Ascending aorta (tissue), 2 donors: ENCODE measurements at regions of chr7 and their contacts with region 1.

Region 1: GRCh38 chr7:97027427-97028234 is 3.0 kb upstream of the DLX5 start:
- DNase-seq: peak in 1 of 2 donors; percentile 84
- H3K4me3 ChIP-seq: peak overlapping the region; percentile 46 to 64
- H3K27ac ChIP-seq: no peak overlapping the region
- H3K4me1 ChIP-seq: peaks cover 13 to 16% of the 10 kb centered on the region in 2 donors
- H3K27me3 ChIP-seq: no peaks in the 10 kb centered on the region
- CTCF ChIP-seq: peak; percentile 69 to 86 (median 81)

Region 2: GRCh38 chr7:95916573-95917297 is 1110.9 kb before region 1 on chr7:
- intact Hi-C with region 1: loop called (anchors 2 kb)
- DNase-seq: peak in 1 of 2 donors; percentile 90
- H3K4me3 ChIP-seq: peak overlapping the region in 1 of 2 donors; percentile 37
- H3K27ac ChIP-seq: no peak overlapping the region
- H3K4me1 ChIP-seq: peaks cover 0 to 3% of the 10 kb centered on the region in 2 donors
- H3K27me3 ChIP-seq: no peaks in the 10 kb centered on the region
- CTCF ChIP-seq: peak; percentile 72 to 94 (median 91)

Region 3: DNA sequence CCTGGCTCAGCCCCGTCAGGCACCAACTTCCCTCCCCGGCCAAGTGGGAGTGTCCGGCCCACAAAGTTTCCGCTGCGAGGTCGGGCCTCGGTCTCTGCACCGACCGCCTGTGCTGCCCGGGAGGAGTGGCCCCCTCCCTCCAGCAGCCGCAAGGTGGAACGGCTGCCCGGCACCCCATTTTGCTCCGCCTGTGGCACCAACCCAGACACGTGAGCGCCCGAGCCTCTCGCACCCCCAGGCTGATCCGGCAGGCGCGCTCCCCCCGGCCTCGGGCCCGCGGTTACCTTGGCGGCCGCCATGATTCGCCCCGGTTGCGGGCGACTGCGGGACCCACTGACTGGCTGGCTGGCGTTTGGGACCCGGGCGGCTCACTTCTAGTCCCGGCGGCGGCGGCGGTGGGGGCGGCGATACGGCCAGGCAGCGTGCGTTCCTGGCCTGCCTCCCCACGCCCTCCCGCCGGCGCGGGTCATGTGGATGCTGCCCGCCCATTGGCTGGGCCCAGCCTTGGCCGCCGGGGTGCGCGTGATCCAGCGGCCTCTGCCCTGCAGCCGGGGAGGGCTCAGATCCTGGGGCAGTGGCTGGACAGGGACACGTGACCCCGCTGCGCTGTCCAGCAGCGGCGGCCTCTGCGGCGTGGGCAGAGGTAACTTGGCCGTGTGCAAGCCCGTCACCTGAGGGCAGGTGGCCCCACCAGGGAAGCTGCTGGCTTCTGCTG is 705.8 kb before region 1 on chr7 and contains the start of gene SLC25A13:
- intact Hi-C with region 1: loop called (anchors 10 kb)
- DNase-seq: peak; percentile 80 to 94
- H3K4me3 ChIP-seq: peak within 1 kb of the TSS; percentile 68 to 85
- H3K27ac ChIP-seq: peak within 1 kb of the TSS; percentile 93
- H3K4me1 ChIP-seq: peaks cover 6 to 16% of the 10 kb centered on the region in 2 donors
- H3K27me3 ChIP-seq: no peaks in the 10 kb centered on the region
- CTCF ChIP-seq: no peak
- total RNA-seq, gene SLC25A13: 5.6 TPM

Region 4: DNA sequence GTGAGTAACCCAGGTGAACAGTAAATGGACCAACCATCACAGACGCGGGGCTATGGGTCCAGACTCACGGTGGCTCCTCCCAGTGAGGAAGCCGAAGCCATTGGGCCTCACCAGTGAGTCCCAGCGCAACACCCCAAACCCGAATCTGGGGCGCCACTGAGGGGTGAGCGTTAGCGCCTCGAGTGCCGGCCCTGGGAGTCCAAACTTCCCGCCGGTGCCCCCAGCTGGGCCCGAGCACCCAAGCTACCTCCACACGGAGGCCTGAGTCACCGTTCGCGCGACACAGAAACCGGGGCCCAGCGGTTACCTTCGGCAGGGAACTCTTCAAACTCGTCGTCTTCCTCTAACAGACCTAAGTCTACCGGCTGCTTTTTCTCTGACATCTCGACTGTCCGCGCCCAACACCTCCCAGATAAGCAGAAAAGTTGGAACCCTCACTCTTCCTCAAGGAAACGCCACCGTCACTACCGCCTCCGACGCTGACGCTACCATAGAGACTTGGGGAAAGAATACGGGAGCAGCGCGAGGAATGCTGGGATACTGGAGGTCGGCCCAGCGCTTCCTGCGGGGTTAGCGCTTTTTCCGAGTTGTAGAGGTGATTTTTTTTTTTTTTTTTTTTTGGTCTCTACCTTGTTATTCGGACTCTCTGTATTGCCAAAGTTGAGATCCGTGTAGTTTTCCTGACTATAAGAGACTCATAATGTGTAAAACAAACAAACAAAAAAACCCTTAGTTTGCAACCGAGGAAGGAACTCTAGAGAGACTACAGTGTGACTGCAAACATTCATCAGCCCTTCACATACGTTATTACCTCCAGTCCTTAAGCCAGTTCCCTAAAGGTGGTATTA is 318.0 kb before region 1 on chr7 and contains the start of gene SEM1:
- intact Hi-C with region 1: loop called (anchors 10 kb)
- DNase-seq: peak; percentile 16 to 91
- H3K4me3 ChIP-seq: peak within 1 kb of the TSS; percentile 75 to 97
- H3K27ac ChIP-seq: peak within 1 kb of the TSS; percentile 89 to 92
- H3K4me1 ChIP-seq: peaks cover 4 to 10% of the 10 kb centered on the region in 2 donors
- H3K27me3 ChIP-seq: no peaks in the 10 kb centered on the region
- CTCF ChIP-seq: no peak
- total RNA-seq, gene SEM1: 0.43 TPM